Lower lobe of right lung (tissue), 2 donors: ENCODE measurements at regions of chr5 and their contacts with region 1.

Region 1: DNA sequence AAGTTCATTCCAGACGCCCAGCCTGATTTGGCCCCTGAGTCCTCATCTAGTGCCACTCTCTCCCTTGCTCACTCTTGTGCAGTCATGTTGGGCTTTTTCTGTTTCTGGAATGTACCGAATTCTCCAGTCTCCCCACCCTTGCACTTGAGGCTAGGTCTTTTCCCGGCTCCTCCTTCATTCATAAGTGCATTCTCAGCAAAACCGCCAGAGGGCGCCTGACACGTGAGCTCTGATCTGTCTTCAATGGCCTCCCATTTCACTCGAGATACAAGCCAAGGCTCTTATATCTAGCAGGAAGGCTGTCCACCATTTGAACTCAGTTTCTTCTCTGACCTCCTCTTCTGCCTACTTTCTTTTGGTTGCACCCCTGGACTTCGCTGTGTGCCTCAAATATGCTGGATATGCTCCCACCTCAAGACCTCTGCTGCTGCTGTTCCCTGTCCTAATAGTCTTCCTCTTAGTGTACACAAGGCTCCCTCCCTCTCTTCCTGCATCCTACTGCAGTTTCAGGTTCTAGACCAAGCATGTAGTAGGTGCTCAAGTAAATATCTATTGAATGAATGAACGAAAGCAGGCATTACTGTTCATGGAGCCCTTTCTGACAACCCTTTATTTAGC is 568.1 kb upstream of the WWC1 start:
- DNase-seq: peak; percentile 72
- ATAC-seq: peak; percentile 92
- H3K4me3 ChIP-seq: no peak overlapping the region
- H3K27ac ChIP-seq: no peak overlapping the region
- H3K4me1 ChIP-seq: no peaks in the 10 kb centered on the region
- H3K27me3 ChIP-seq: no peaks in the 10 kb centered on the region
- CTCF ChIP-seq: peak; percentile 86

Region 2: DNA sequence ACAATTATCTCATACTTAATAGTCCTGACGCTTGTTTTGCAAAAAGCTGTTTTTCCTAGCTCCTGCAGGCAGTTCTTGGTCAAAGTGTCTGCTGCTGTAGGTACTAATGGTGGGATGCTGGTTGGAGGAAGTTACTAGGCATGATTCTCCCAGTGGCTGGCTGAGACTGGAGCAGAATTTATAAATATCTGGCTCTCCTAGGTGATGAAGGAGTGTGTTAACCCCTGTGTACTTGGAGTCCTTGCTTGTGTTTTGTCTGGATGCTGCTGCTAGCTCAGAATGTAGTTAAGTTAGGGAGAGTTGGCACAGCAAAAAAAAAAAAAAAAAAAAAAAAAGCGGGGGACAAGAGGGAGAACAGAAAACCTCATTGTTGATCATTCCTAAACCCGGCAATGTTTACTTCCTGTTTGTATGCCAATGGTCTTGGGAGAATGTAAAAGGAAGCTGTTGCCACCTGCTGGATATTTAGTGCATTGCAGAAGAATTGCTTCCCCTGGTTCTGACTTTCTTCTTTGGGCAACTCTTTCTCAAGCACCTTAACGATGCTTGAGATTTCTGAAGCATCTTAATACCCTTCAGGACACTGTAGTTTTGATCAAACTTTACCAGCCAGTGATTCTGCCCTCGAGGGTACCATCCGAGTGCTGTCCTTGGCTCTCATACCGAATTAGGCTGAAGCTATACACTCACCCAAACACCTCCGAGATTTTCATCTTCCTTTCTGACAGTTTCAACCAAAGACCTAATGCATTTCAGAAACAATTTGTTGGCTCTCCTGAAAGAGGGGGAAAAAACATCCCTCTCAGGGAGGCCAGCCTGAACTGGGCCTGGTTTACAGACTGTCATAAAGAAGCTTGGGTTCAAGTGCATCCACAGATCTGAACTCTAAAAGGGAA is 496.4 kb after region 1 on chr5:
- intact Hi-C with region 1: loop called (anchors 10 kb)
- DNase-seq: no peak
- ATAC-seq: peak; percentile 77 to 80
- H3K4me3 ChIP-seq: no peak overlapping the region
- H3K27ac ChIP-seq: no peak overlapping the region
- H3K4me1 ChIP-seq: no peaks in the 10 kb centered on the region
- H3K27me3 ChIP-seq: no peaks in the 10 kb centered on the region
- CTCF ChIP-seq: peak; percentile 89